ENCODE measurements at regions of chr14 and their contacts with region 1.

Region 1: DNA sequence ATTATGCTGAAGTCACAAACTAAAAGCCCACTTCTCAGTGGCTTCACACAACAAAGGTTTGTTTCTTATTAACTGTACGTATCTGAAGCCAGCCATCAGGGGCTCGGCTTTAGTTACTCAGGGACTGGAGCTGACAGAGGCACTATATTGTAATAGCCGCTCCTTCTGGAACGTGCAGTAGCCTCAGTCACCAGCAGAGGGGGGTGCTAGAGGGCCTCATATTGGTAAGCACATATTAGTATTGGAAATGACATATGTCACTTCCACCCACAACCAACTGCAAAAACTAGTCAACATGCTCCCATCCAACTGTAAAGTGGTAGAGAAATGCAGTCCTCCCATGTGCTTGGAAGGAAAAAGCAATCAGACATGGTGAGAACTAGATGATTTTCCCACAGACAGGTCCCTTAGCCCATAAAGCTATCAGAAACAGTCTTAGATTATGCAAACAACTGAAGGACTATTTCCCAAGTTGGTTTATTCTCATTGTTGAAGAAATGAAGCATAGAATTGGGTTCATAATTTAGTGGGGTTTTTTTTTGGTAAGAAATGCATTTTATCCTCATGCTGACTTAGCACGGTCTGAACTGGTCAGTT is 183.6 kb upstream of the G2E3 start:
- DNase-seq: peak; percentile 27 to 85
- H3K4me3 ChIP-seq: no peak overlapping the region
- H3K27ac ChIP-seq: no peak overlapping the region
- H3K4me1 ChIP-seq: 0 out of 7 replicates have a peak, but pooled peaks cover 0 to 2% (median 0%) of the 10 kb centered on the region in 4 experiments
- H3K27me3 ChIP-seq: no peaks in the 10 kb centered on the region
- CTCF ChIP-seq: peak; percentile 71 to 81 (median 74)
- EP300 ChIP-seq: no peak
- POLR2A ChIP-seq: no peak
- RAD21 ChIP-seq: peak; percentile 73 to 78

Region 2: GRCh38 chr14:29671034-29671433 is 704.4 kb before region 1 on chr14:
- CTCF ChIA-PET with region 1: no interaction called
- POLR2A ChIA-PET with region 1: no interaction called
- DNase-seq: no peak
- H3K4me3 ChIP-seq: no peak overlapping the region
- H3K27ac ChIP-seq: no peak overlapping the region
- H3K4me1 ChIP-seq: no peaks in the 10 kb centered on the region; a peak in 1 of 7 replicates
- H3K27me3 ChIP-seq: no peaks in the 10 kb centered on the region
- CTCF ChIP-seq: no peak
- EP300 ChIP-seq: no peak
- POLR2A ChIP-seq: no peak
- RAD21 ChIP-seq: no peak

Region 3: DNA sequence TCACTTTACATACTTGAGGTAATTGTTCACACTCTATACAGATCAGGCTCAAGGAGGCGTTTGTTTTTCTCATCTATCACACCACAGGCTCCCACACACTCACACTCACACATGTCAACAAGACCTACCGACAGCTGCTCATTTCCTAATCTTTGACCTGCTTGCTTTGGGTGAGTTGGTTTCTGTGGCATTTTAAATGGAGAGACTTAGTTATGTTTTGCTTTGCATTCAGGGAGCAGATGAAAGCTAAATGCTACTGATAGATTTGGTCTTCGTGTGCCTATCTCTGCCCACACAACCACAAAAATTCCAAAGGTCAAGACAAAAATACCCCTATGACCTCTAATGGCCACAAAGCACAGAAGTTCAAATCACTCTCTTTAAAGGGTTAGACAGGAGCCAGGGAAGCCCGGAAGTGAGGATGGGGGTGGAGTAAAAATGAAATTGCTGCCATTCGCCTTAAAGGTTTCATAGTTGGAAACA is 19.9 kb before region 1 on chr14:
- CTCF ChIA-PET with region 1: interaction called, 25 read pairs
- POLR2A ChIA-PET with region 1: no interaction called
- DNase-seq: no peak
- H3K4me3 ChIP-seq: no peak overlapping the region
- H3K27ac ChIP-seq: no peak overlapping the region
- H3K4me1 ChIP-seq: peaks cover 0 to 2% (median 0%) of the 10 kb centered on the region in 4 experiments; a peak in 1 of 7 replicates
- H3K27me3 ChIP-seq: no peaks in the 10 kb centered on the region
- CTCF ChIP-seq: no peak
- EP300 ChIP-seq: no peak
- POLR2A ChIP-seq: no peak
- RAD21 ChIP-seq: no peak

Region 4: DNA sequence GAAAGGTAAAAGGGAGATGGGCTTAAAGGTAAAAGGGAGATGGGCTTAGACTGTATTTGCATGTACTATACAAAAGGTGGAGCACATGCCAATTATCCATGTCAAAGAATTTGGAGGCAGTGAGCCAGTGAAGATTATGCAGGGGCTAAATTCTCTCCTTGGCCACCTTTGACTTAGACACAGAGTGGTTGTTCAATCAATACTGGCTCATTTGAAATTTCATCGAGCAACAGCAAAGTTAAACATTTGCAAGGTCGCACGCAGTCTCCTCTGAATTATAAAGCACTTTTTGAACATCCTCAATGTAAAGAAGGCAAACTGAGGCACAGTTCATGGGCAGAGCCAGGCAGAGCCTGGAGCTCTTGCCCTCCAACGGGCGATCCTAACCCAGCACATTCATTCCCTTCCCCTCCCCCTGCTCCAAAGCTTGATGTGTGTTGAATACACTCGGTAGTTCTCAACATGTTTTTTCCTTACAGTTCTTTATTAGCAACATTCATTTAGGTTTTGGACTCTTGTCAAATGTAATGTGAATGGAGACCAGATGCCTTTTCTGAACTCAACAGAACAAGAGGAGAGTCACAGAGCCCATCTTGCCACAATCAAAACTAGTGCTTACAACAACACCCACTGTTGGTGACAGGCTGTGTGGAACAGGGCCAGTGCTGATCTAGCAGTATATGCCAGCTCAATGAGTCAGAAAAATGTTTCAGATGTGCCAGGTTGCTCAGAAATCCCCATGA is 13.9 kb after region 1 on chr14:
- CTCF ChIA-PET with region 1: interaction called, 21 read pairs
- POLR2A ChIA-PET with region 1: no interaction called
- DNase-seq: no peak
- H3K4me3 ChIP-seq: no peak overlapping the region
- H3K27ac ChIP-seq: no peak overlapping the region
- H3K4me1 ChIP-seq: no peaks in the 10 kb centered on the region; a peak in 1 of 7 replicates
- H3K27me3 ChIP-seq: no peaks in the 10 kb centered on the region
- CTCF ChIP-seq: no peak
- EP300 ChIP-seq: no peak
- POLR2A ChIP-seq: no peak
- RAD21 ChIP-seq: no peak

Region 5: DNA sequence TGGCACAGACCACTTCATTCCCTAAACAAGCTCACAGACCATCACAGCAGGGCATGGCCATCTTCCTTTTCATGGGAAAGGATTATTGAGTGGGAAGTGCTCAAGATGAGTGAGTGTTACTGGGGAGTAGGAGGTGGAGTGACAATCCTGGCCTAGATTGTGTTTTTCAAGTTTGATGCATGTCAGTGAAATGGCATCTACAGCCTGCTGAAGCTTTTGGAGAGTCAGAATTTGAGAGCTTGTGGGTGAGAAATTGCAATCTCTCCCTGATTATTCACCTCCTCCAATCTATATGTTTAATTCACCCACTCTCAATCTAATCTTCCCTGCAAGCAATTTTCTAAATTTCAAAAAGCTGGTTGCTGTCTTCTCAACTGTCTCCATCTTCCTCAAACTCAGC is 27.5 kb after region 1 on chr14:
- CTCF ChIA-PET with region 1: interaction called, 19 read pairs
- POLR2A ChIA-PET with region 1: no interaction called
- DNase-seq: no peak
- H3K4me3 ChIP-seq: no peak overlapping the region
- H3K27ac ChIP-seq: no peak overlapping the region
- H3K4me1 ChIP-seq: no peaks in the 10 kb centered on the region
- H3K27me3 ChIP-seq: no peaks in the 10 kb centered on the region
- CTCF ChIP-seq: no peak
- EP300 ChIP-seq: no peak
- POLR2A ChIP-seq: no peak
- RAD21 ChIP-seq: no peak

Region 6: GRCh38 chr14:30443368-30444007 is 68.1 kb after region 1 on chr14:
- CTCF ChIA-PET with region 1: interaction called, 33 read pairs
- POLR2A ChIA-PET with region 1: interaction called, 3 read pairs
- DNase-seq: no peak
- H3K4me3 ChIP-seq: no peak overlapping the region
- H3K27ac ChIP-seq: no peak overlapping the region
- H3K4me1 ChIP-seq: peaks cover 0 to 5% (median 2%) of the 10 kb centered on the region in 4 experiments; a peak in 2 of 7 replicates
- H3K27me3 ChIP-seq: no peaks in the 10 kb centered on the region
- CTCF ChIP-seq: peak in 2 of 3 experiments; percentile 66 to 72; a peak in 3 of 4 replicates
- EP300 ChIP-seq: no peak
- POLR2A ChIP-seq: no peak
- RAD21 ChIP-seq: peak; percentile 95

Region 7: GRCh38 chr14:30569216-30569902 is 194.0 kb after region 1 on chr14:
- CTCF ChIA-PET with region 1: no interaction called
- POLR2A ChIA-PET with region 1: no interaction called
- DNase-seq: no peak
- H3K4me3 ChIP-seq: no peak overlapping the region
- H3K27ac ChIP-seq: no peak overlapping the region
- H3K4me1 ChIP-seq: peaks cover 0 to 10% (median 4%) of the 10 kb centered on the region in 4 experiments; a peak in 3 of 7 replicates
- H3K27me3 ChIP-seq: no peaks in the 10 kb centered on the region
- CTCF ChIP-seq: no peak
- EP300 ChIP-seq: no peak
- POLR2A ChIP-seq: no peak
- RAD21 ChIP-seq: no peak